HEK293 (cell line): ENCODE measurements at regions of chr20 and their contacts with region 1.

Region 1: GRCh38 chr20:40160097-40160550 is 528.9 kb downstream of the MAFB start:
- H3K4me3 ChIP-seq: no peak overlapping the region
- H3K27ac ChIP-seq: no peak overlapping the region
- H3K4me1 ChIP-seq: no peaks in the 10 kb centered on the region
- CTCF ChIP-seq: no peak

Region 2: DNA sequence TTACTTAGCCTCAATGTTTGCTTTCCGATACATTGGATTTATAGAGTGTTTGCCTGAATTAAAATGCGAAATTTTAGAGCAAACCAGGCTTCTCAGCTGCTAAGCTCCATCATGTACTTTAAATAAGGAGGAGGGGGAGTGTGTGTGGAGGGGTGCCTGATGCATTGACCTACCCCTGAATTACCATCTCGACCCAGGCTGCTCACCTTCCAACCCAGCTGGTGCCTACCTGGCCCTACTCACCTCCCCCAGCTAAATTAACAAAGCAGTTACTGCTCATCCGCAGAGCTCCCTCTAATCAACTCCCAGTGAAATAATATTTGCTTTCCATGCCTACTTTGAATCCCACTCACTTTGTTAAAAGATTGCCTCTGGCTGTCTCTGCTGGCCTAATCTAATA is 15.5 kb before region 1 on chr20:
- CTCF ChIA-PET with region 1: interaction called, 10 read pairs
- POLR2A ChIA-PET with region 1: no interaction called
- H3K4me3 ChIP-seq: no peak overlapping the region
- H3K27ac ChIP-seq: no peak overlapping the region
- H3K4me1 ChIP-seq: no peaks in the 10 kb centered on the region
- CTCF ChIP-seq: no peak

Region 3: GRCh38 chr20:40173872-40174271 is 13.7 kb after region 1 on chr20:
- CTCF ChIA-PET with region 1: interaction called, 13 read pairs
- POLR2A ChIA-PET with region 1: no interaction called
- H3K4me3 ChIP-seq: no peak overlapping the region
- H3K27ac ChIP-seq: no peak overlapping the region
- H3K4me1 ChIP-seq: no peaks in the 10 kb centered on the region
- CTCF ChIP-seq: no peak

Region 4: DNA sequence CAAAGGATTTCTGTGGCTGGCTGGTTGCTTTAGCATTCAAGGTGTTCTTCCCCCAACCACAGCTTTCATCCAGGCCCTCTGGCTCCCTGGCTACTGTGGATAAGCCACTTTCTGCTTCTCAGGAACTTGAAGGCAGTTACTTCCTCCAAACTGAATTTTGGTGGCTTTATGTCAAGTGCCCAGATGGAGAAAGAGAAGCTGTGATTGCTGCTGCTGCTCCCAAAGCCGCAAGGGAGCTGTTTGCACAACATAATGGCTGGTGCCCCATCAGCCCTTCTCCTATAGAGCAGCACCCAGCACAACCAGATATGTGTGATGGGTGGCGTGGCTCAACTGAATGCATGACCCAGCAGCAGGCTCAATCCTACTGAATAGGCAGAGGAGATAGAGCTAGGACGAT is 63.7 kb after region 1 on chr20:
- CTCF ChIA-PET with region 1: no interaction called
- POLR2A ChIA-PET with region 1: no interaction called
- H3K4me3 ChIP-seq: no peak overlapping the region
- H3K27ac ChIP-seq: no peak overlapping the region
- H3K4me1 ChIP-seq: no peaks in the 10 kb centered on the region
- CTCF ChIP-seq: no peak